Breast epithelium (tissue), 4 donors: ENCODE measurements at regions of chr7 and their contacts with region 1.

Region 1: DNA sequence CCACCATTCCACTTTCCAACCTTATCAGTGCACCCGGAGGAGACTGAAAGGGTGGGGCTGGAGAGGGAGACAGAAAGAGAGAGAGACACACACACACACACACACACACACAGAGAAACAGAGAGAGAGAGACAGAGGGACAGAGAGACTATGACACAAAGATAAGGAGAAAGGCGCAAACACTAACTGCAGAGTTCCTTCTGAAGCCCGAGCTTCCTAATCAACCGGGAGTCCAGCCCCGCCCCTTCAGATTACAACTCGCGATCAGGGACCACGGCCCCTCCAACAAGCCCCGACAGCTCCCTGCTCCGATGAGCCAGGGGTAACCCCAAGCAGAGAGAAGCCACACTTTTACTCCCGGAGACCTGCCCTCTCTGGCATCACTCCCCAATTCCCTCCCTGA is 495 bp downstream of the GAL3ST4 start:
- DNase-seq: no peak
- H3K4me3 ChIP-seq: peak overlapping the region; percentile 46 to 65 (median 52)
- H3K27ac ChIP-seq: peak overlapping the region; percentile 45 to 56
- H3K4me1 ChIP-seq: no peaks in the 10 kb centered on the region
- H3K27me3 ChIP-seq: no peaks in the 10 kb centered on the region
- CTCF ChIP-seq: no peak
- POLR2A ChIP-seq: no peak

Region 2: GRCh38 chr7:99752390-99752789 is 415.5 kb before region 1 on chr7:
- intact Hi-C with region 1: loop called (anchors 5 kb)
- DNase-seq: no peak
- H3K4me3 ChIP-seq: no peak overlapping the region
- H3K27ac ChIP-seq: no peak overlapping the region
- H3K4me1 ChIP-seq: no peaks in the 10 kb centered on the region
- H3K27me3 ChIP-seq: no peaks in the 10 kb centered on the region
- CTCF ChIP-seq: no peak
- POLR2A ChIP-seq: no peak

Region 3: GRCh38 chr7:100132697-100133151 is 35.2 kb before region 1 on chr7:
- intact Hi-C with region 1: no loop called
- DNase-seq: no peak
- H3K4me3 ChIP-seq: no peak overlapping the region
- H3K27ac ChIP-seq: no peak overlapping the region
- H3K4me1 ChIP-seq: no peaks in the 10 kb centered on the region
- H3K27me3 ChIP-seq: no peaks in the 10 kb centered on the region
- CTCF ChIP-seq: peak; percentile 27 to 84 (median 73)
- POLR2A ChIP-seq: no peak